ENCODE measurements at regions of chr4 and their contacts with region 1.

Region 1: GRCh38 chr4:14254252-14254651 is 626.7 kb upstream of the BOD1L1 start:
- DNase-seq: peak in 1 of 2 donors; percentile 46
- ATAC-seq: peak; percentile 44

Region 2: DNA sequence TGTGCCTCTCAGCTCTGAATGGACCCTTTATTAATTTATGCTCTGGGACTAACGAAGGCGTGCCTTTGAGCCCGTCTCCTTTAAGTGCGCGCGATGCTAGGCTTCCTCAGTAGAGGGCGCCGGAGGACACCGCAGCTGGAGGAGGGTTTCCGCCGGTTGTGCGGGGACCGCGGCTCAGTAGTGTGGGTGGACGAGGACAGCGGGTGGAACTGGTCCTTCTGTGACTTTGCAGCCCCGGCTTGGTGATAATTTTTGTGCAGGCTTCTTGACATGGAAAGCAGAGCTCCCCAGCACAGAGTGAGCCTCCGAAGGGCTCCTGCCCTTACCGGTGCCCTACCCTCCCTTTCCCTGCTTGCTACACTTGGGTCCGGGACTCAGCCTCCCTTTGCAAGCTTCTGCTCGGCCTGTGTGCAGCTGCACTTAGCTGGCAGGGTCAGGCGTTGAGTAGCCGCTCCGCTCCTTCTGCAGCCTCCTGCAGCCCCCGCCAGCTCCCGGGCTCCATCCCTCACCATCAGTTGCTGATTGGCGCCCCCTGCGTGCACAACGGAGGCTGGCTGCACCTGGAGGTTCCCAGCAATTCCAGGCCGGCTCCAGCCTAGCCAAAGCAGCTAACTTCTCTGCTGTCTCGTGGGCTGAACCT is 600.0 kb before region 1 on chr4:
- intact Hi-C with region 1: loop called in 1 of 2 experiments (anchors 10 kb)
- DNase-seq: peak; percentile 57 to 85
- ATAC-seq: peak; percentile 95

Region 3: GRCh38 chr4:15547392-15547791 is 1293.1 kb after region 1 on chr4:
- intact Hi-C with region 1: no loop called
- DNase-seq: no peak
- ATAC-seq: no peak